ENCODE measurements at regions of chr19 and their contacts with region 1.

Region 1: GRCh38 chr19:49590071-49590970 is 661 bp upstream of the PRR12 start:
- DNase-seq: peak; percentile 99
- H3K4me3 ChIP-seq: peak overlapping the region; percentile 80
- H3K27ac ChIP-seq: peak overlapping the region; percentile 97
- H3K4me1 ChIP-seq: peaks cover 7% of the 10 kb centered on the region
- H3K27me3 ChIP-seq: no peaks in the 10 kb centered on the region
- CTCF ChIP-seq: no peak

Region 2: GRCh38 chr19:49127674-49128544 is 462.4 kb before region 1 on chr19:
- CTCF ChIA-PET with region 1: no interaction called
- POLR2A ChIA-PET with region 1: interaction called, 11 read pairs
- intact Hi-C with region 1: no loop called
- DNase-seq: peak; percentile 98
- H3K4me3 ChIP-seq: peak overlapping the region; percentile 49
- H3K27ac ChIP-seq: no peak overlapping the region
- H3K4me1 ChIP-seq: peaks cover 18% of the 10 kb centered on the region
- H3K27me3 ChIP-seq: no peaks in the 10 kb centered on the region
- CTCF ChIP-seq: no peak

Region 3: DNA sequence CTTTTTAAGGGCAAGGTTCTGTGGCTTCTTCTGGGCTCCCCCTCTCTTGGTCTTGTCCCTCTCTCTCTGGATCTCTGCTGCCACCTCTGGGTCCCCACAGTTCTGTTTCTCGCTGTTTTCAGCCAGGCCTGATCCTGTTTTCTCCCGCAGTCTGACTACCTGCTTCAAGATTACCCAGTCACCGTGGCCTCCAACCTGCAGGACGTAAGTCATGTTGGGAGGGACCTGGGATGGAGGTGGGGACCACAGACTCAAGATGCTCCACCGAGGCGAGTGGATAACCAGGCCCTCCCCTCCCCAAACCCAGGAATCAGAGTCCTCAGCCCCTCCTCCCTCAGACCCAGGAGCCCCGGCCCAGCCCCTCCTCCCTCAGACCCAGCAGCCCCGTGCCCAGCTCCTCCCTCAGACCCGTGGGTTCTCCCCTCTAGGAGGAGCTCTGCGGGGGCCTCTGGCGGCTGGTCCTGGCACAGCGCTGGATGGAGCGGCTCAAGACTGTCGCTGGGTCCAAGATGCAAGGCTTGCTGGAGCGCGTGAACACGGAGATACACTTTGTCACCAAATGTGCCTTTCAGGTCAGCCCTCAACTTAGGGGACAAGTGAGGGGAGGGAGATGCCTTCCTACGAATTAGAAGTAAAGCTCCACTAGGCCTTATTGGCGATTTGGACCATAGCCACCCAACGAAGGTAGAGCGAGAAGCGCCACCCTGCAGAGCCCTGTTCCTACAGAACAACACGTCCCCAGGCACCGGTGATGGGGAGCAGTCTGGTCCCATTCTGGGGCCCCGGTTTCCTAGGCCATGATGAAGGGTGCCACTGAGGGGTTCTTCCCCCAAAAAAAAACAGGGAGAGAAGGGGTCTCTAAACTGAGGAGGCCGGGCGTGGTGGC is 114.1 kb before region 1 on chr19:
- CTCF ChIA-PET with region 1: interaction called, 12 read pairs
- POLR2A ChIA-PET with region 1: no interaction called
- intact Hi-C with region 1: no loop called
- DNase-seq: peak; percentile 83
- H3K4me3 ChIP-seq: no peak overlapping the region
- H3K27ac ChIP-seq: no peak overlapping the region
- H3K4me1 ChIP-seq: peaks cover 10% of the 10 kb centered on the region
- H3K27me3 ChIP-seq: no peaks in the 10 kb centered on the region
- CTCF ChIP-seq: peak; percentile 83

Region 4: GRCh38 chr19:49560358-49560900 is 29.9 kb before region 1 on chr19:
- CTCF ChIA-PET with region 1: no interaction called
- POLR2A ChIA-PET with region 1: no interaction called
- intact Hi-C with region 1: no loop called
- DNase-seq: no peak
- H3K4me3 ChIP-seq: no peak overlapping the region
- H3K27ac ChIP-seq: peak overlapping the region; percentile 57
- H3K4me1 ChIP-seq: peaks cover 21% of the 10 kb centered on the region
- H3K27me3 ChIP-seq: no peaks in the 10 kb centered on the region
- CTCF ChIP-seq: no peak

Region 5: DNA sequence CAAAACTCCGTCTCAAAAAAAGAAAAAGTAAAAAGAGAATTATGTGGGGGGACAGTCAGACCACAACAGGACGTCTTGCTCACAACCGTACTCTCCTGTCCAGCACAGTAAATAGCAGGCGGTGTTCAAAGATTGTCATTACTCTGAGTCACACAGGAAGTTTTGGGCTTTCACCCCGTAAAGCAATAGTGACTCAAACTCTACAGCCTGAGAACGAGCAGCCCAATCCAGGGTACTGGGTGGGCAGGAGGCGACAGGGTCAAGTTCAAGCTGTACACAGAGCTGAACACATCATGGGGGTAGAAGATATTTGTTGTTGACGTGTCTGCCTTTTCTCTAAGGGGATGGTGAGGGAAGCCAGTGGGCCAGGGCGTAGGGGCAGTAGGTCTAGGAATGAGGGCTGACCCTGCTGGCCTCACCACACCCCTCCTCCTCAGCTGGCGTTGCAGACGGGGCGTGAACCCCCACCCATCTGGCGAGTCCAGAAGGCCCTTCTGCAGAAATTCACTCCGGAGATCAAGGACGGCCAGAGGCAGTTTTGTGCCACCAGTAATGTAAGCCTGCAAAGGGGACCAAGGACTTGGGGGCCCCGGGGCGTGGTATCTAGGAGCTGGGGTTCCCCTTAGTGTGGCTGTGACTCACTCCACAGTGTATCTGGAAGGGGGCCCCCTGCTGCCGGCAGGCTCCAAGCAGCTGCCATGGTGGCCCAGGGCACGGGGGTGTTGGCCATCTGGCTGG is 23.9 kb after region 1 on chr19:
- CTCF ChIA-PET with region 1: interaction called, 12 read pairs
- POLR2A ChIA-PET with region 1: interaction called, 6 read pairs
- intact Hi-C with region 1: no loop called
- DNase-seq: no peak
- H3K4me3 ChIP-seq: no peak overlapping the region
- H3K27ac ChIP-seq: no peak overlapping the region
- H3K4me1 ChIP-seq: no peaks in the 10 kb centered on the region
- H3K27me3 ChIP-seq: no peaks in the 10 kb centered on the region
- CTCF ChIP-seq: no peak

Region 6: GRCh38 chr19:49676690-49677231 is 86.4 kb after region 1 on chr19:
- CTCF ChIA-PET with region 1: no interaction called
- POLR2A ChIA-PET with region 1: interaction called, 9 read pairs
- intact Hi-C with region 1: loop called (anchors 5 kb)
- DNase-seq: peak; percentile 100
- H3K4me3 ChIP-seq: peak overlapping the region; percentile 81
- H3K27ac ChIP-seq: peak overlapping the region; percentile 98
- H3K4me1 ChIP-seq: peaks cover 37% of the 10 kb centered on the region
- H3K27me3 ChIP-seq: no peaks in the 10 kb centered on the region
- CTCF ChIP-seq: no peak